Psoas muscle (tissue), 8 donors: ENCODE measurements at regions of chr2 and their contacts with region 1.

Region 1: DNA sequence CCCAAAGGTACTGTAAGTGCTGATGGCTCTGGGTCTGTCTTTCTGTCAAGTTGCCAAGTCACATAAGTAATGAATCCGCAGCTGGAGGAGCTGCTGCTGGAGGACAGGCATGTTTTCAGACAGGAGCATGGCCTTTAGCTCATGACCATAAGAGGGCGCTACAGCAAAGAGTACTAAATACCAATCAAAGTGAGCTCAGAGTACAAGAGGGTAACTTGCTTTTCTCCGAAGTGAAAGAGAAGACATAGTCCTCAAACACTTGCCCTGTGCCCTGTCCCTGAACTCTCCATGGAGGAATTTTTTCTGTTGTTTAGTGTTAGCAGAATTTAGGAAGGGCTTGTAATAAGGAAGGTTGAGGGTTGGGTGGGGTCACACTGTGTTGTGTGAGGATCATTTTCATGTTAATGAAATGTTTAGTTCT is 58.0 kb upstream of the EML6 start:
- DNase-seq: no peak
- ATAC-seq: peak; percentile 51 to 70 (median 63)
- H3K4me3 ChIP-seq: no peak overlapping the region
- H3K27ac ChIP-seq: peak overlapping the region; percentile 73
- H3K4me1 ChIP-seq: peaks cover 38% of the 10 kb centered on the region
- H3K27me3 ChIP-seq: no peaks in the 10 kb centered on the region
- CTCF ChIP-seq: peak; percentile 54

Region 2: DNA sequence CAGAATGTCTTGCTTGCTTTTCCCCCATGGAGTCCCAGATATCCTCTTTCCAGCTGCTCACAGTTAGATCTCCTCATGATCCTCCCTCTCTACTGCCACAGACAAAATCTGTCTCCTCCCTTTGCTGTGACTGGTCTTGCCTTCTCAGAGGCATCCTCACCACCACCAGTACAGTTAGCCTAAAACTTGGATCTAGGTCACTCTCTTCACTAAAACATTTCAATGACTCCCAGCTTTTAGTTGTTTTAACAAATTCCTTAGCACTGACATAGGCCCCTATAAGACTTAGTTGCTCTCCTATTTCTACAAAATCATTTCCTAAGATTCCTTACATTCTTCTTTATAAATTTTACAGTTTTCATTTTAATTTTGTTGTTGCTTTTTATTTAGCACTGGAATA is 1632.0 kb before region 1 on chr2:
- intact Hi-C with region 1: no loop called
- DNase-seq: no peak
- ATAC-seq: no peak
- H3K4me3 ChIP-seq: no peak overlapping the region
- H3K27ac ChIP-seq: no peak overlapping the region
- H3K4me1 ChIP-seq: no peaks in the 10 kb centered on the region
- H3K27me3 ChIP-seq: no peaks in the 10 kb centered on the region
- CTCF ChIP-seq: no peak

Region 3: DNA sequence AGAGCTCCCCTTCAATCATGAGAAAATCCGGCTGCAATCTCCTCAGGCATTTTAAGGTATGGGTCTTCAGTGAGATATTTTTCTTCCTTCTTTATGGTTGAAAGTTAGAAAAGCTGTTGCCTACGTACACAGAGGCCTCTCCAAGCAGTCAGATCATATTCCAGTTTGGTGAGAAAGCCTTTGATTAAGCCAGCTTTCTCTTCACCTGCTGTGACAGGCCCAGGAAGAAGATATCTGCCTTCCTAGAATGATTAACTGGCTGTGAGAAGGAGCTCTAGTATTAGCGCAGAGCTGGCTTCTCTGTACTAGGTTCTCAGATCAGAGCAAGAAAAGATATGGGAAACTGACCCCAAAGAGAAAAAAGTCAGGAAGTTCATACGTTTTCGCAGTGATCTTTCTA is 1482.8 kb before region 1 on chr2:
- intact Hi-C with region 1: no loop called
- DNase-seq: no peak
- ATAC-seq: no peak
- H3K4me3 ChIP-seq: no peak overlapping the region
- H3K27ac ChIP-seq: no peak overlapping the region
- H3K4me1 ChIP-seq: no peaks in the 10 kb centered on the region
- H3K27me3 ChIP-seq: no peaks in the 10 kb centered on the region
- CTCF ChIP-seq: no peak

Region 4: GRCh38 chr2:54838585-54839035 is 173.2 kb after region 1 on chr2:
- intact Hi-C with region 1: loop called in 1 of 2 experiments (anchors 10 kb)
- DNase-seq: peak; percentile 67 to 70
- ATAC-seq: peak; percentile 77 to 94 (median 86)
- H3K4me3 ChIP-seq: no peak overlapping the region
- H3K27ac ChIP-seq: no peak overlapping the region
- H3K4me1 ChIP-seq: no peaks in the 10 kb centered on the region
- H3K27me3 ChIP-seq: no peaks in the 10 kb centered on the region
- CTCF ChIP-seq: peak; percentile 93

Region 5: GRCh38 chr2:55862673-55863390 is 1197.4 kb after region 1 on chr2:
- intact Hi-C with region 1: no loop called
- DNase-seq: no peak
- ATAC-seq: peak; percentile 57 to 84 (median 80)
- H3K4me3 ChIP-seq: no peak overlapping the region
- H3K27ac ChIP-seq: peak overlapping the region; percentile 37
- H3K4me1 ChIP-seq: no peaks in the 10 kb centered on the region
- H3K27me3 ChIP-seq: no peaks in the 10 kb centered on the region
- CTCF ChIP-seq: no peak